ENCODE measurements at regions of chr14 and their contacts with region 1.

Region 1: GRCh38 chr14:69611201-69612011 is at the start of gene SUSD6:
- DNase-seq: peak; percentile 79 to 87 (median 85)
- ATAC-seq: peak; percentile 88
- H3K4me3 ChIP-seq: peak within 1 kb of the TSS; percentile 91
- H3K4me3 Mint-ChIP-seq: peak within 1 kb of the TSS; percentile 91 to 98 (median 94)
- H3K27ac ChIP-seq: peak within 1 kb of the TSS; percentile 85
- H3K27ac Mint-ChIP-seq: peak within 1 kb of the TSS; percentile 95 to 99 (median 98)
- H3K4me1 ChIP-seq: peaks cover 38 to 54% of the 10 kb centered on the region in 2 donors
- H3K4me1 Mint-ChIP-seq: peaks cover 44 to 69% (median 63%) of the 10 kb centered on the region in 7 donors
- H3K27me3 ChIP-seq: no peaks in the 10 kb centered on the region
- H3K27me3 Mint-ChIP-seq: no peaks in the 10 kb centered on the region
- total RNA-seq, gene SUSD6: 42.9 to 90.8 (median 65.0) TPM

Region 2: GRCh38 chr14:67674481-67675169 is 1936.8 kb before region 1 on chr14 and contains the start of gene VTI1B:
- CTCF ChIA-PET with region 1: no interaction called
- POLR2A ChIA-PET with region 1: no interaction called
- intact Hi-C with region 1: loop called in 1 of 2 experiments (anchors 2 kb)
- DNase-seq: peak; percentile 71 to 84 (median 80)
- ATAC-seq: peak; percentile 95
- H3K4me3 ChIP-seq: peak within 1 kb of the TSS; percentile 65
- H3K4me3 Mint-ChIP-seq: peak within 1 kb of the TSS; percentile 91 to 96 (median 93)
- H3K27ac ChIP-seq: peak within 1 kb of the TSS; percentile 95
- H3K27ac Mint-ChIP-seq: peak within 1 kb of the TSS; percentile 82 to 96 (median 92)
- H3K4me1 ChIP-seq: peaks cover 17 to 21% of the 10 kb centered on the region in 2 donors
- H3K4me1 Mint-ChIP-seq: peaks cover 22 to 62% (median 55%) of the 10 kb centered on the region in 7 donors
- H3K27me3 ChIP-seq: no peaks in the 10 kb centered on the region
- H3K27me3 Mint-ChIP-seq: no peaks in the 10 kb centered on the region
- total RNA-seq, gene VTI1B: 49.2 to 82.4 (median 65.9) TPM

Region 3: DNA sequence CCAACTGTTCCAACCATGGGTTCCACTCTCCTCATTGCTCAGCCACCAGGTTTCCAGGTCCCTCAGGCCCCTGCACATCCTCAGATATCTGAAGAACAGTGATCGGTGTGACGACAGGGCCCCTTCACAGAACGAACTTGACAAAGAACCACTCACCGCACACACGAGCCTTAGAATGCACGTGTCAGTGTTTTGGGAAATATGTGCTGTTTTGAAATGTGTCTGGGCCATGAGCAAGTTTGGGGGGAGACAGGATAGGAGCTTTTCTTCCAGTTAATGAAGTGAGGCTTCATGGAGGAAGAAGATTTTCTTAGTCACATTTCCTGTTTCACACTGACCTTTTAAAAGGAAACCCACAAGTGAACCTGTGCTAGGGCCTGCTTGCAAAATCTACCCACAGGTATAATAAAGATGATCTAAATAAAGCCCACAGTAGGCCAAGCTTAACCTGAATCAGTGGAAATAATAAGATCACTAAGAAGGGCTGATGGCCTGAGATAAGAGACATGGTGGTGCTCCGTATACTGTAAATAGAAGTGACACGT is 877.1 kb before region 1 on chr14:
- CTCF ChIA-PET with region 1: no interaction called
- POLR2A ChIA-PET with region 1: no interaction called
- intact Hi-C with region 1: no loop called
- DNase-seq: no peak
- ATAC-seq: peak; percentile 60
- H3K4me3 ChIP-seq: no peak overlapping the region
- H3K4me3 Mint-ChIP-seq: peak overlapping the region in 8 of 10 donors; percentile 2 to 50 (median 14)
- H3K27ac ChIP-seq: no peak overlapping the region
- H3K27ac Mint-ChIP-seq: peak overlapping the region in 7 of 9 donors; percentile 3 to 82 (median 66)
- H3K4me1 ChIP-seq: peaks cover 12 to 31% of the 10 kb centered on the region in 2 donors
- H3K4me1 Mint-ChIP-seq: peaks cover 17 to 53% (median 42%) of the 10 kb centered on the region in 7 donors
- H3K27me3 ChIP-seq: no peaks in the 10 kb centered on the region
- H3K27me3 Mint-ChIP-seq: no peaks in the 10 kb centered on the region

Region 4: DNA sequence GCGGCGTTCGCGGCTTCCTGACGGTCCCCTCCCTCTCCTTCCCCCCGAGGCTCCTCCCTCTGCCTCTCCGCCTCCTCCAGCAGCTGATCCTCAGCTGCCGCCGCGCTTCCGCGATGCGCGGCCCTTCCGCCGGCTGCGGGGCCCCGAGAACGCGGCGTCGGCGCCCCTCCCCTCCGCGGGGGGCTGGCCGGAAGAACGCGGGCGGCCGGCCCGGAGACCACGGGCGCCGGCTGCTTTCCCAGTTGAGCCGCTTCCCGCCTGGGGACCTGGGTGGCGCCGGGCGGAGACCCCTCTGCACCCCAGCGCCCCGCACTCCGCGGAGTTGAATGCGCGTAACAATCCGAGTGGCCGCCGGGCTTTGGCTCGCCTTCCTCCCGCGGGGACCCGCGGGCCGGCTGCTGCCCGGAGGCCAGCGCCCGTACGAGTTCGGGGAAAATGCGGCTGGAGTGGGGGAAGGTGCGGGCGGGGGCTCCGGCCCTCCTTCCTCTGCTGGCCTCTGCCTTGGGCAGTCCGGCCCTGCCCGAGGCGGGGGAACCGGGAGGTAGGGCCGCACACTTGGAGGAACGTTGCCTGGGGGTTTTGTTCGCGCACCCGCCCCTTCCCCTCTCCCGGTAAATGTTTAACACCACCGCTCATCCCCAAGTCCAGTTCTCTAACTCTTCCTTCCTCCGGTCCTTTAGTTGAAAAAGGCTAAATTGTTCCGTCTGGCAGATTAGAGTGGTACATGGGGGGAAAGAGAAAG is 458.1 kb before region 1 on chr14:
- CTCF ChIA-PET with region 1: no interaction called
- POLR2A ChIA-PET with region 1: no interaction called
- intact Hi-C with region 1: loop called in 1 of 2 experiments (anchors 2 kb)
- DNase-seq: peak; percentile 76 to 96 (median 91)
- ATAC-seq: peak; percentile 94
- H3K4me3 ChIP-seq: peak overlapping the region; percentile 83
- H3K4me3 Mint-ChIP-seq: peak overlapping the region; percentile 89 to 100 (median 97)
- H3K27ac ChIP-seq: peak overlapping the region; percentile 90
- H3K27ac Mint-ChIP-seq: peak overlapping the region; percentile 84 to 98 (median 93)
- H3K4me1 ChIP-seq: peaks cover 11 to 12% of the 10 kb centered on the region in 2 donors
- H3K4me1 Mint-ChIP-seq: peaks cover 30 to 37% (median 36%) of the 10 kb centered on the region in 7 donors
- H3K27me3 ChIP-seq: no peaks in the 10 kb centered on the region
- H3K27me3 Mint-ChIP-seq: peaks cover 0 to 36% (median 0%) of the 10 kb centered on the region in 5 donors

Region 5: GRCh38 chr14:69637503-69638030 is 26.2 kb after region 1 on chr14:
- CTCF ChIA-PET with region 1: interaction called, 5 read pairs
- POLR2A ChIA-PET with region 1: interaction called, 34 read pairs
- intact Hi-C with region 1: loop called (anchors 1 kb)
- DNase-seq: no peak
- ATAC-seq: peak; percentile 21
- H3K4me3 ChIP-seq: no peak overlapping the region
- H3K4me3 Mint-ChIP-seq: peak overlapping the region; percentile 55 to 83 (median 72)
- H3K27ac ChIP-seq: peak overlapping the region; percentile 24
- H3K27ac Mint-ChIP-seq: peak overlapping the region; percentile 47 to 94 (median 80)
- H3K4me1 ChIP-seq: peaks cover 42 to 60% of the 10 kb centered on the region in 2 donors
- H3K4me1 Mint-ChIP-seq: peaks cover 68 to 93% (median 81%) of the 10 kb centered on the region in 7 donors
- H3K27me3 ChIP-seq: no peaks in the 10 kb centered on the region
- H3K27me3 Mint-ChIP-seq: no peaks in the 10 kb centered on the region

Region 6: DNA sequence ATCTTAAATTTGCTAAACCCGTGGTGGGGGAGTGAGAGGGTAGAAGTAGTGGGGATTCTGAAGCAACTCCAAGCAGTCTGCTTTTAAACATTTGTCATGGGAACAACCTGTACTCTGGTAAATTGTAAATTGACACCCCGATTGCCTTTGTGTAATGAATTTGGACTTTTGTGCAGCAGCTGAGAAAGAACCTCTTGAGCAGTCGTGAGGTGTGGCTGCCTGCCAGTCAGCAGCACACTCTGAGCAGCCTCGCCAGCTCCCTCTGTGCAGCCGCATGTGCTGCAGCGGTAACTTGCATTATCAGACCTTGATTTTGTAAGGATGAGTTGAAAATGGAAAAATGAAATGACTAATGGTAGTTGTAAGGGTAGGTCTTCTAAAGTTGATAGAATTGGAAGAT is 74.3 kb after region 1 on chr14:
- CTCF ChIA-PET with region 1: interaction called, 6 read pairs
- POLR2A ChIA-PET with region 1: interaction called, 3 read pairs
- intact Hi-C with region 1: loop called in 1 of 2 experiments (anchors 1 kb)
- DNase-seq: peak in 1 of 9 donors; percentile 38
- ATAC-seq: peak; percentile 34
- H3K4me3 ChIP-seq: no peak overlapping the region
- H3K4me3 Mint-ChIP-seq: peak overlapping the region in 3 of 10 donors; percentile 1 to 78 (median 39)
- H3K27ac ChIP-seq: no peak overlapping the region
- H3K27ac Mint-ChIP-seq: peak overlapping the region in 5 of 9 donors; percentile 14 to 82 (median 57)
- H3K4me1 ChIP-seq: peaks cover 27 to 28% of the 10 kb centered on the region in 2 donors
- H3K4me1 Mint-ChIP-seq: peaks cover 71 to 83% (median 81%) of the 10 kb centered on the region in 7 donors
- H3K27me3 ChIP-seq: no peaks in the 10 kb centered on the region
- H3K27me3 Mint-ChIP-seq: no peaks in the 10 kb centered on the region

Region 7: GRCh38 chr14:69827560-69827959 is 216.2 kb after region 1 on chr14:
- CTCF ChIA-PET with region 1: no interaction called
- POLR2A ChIA-PET with region 1: no interaction called
- intact Hi-C with region 1: no loop called
- DNase-seq: no peak
- ATAC-seq: no peak
- H3K4me3 ChIP-seq: no peak overlapping the region
- H3K4me3 Mint-ChIP-seq: no peak overlapping the region
- H3K27ac ChIP-seq: no peak overlapping the region
- H3K27ac Mint-ChIP-seq: no peak overlapping the region
- H3K4me1 ChIP-seq: no peaks in the 10 kb centered on the region
- H3K4me1 Mint-ChIP-seq: no peaks in the 10 kb centered on the region
- H3K27me3 ChIP-seq: no peaks in the 10 kb centered on the region
- H3K27me3 Mint-ChIP-seq: peaks cover 0 to 8% (median 3%) of the 10 kb centered on the region in 5 donors

Region 8: GRCh38 chr14:70655110-70655826 is 1043.9 kb after region 1 on chr14:
- CTCF ChIA-PET with region 1: no interaction called
- POLR2A ChIA-PET with region 1: no interaction called
- intact Hi-C with region 1: loop called in 1 of 2 experiments (anchors 10 kb)
- DNase-seq: peak; percentile 29 to 93 (median 91)
- ATAC-seq: peak; percentile 95
- H3K4me3 ChIP-seq: peak overlapping the region; percentile 43
- H3K4me3 Mint-ChIP-seq: peak overlapping the region; percentile 76 to 89 (median 85)
- H3K27ac ChIP-seq: peak overlapping the region; percentile 84
- H3K27ac Mint-ChIP-seq: peak overlapping the region; percentile 94 to 99 (median 98)
- H3K4me1 ChIP-seq: peaks cover 60 to 83% of the 10 kb centered on the region in 2 donors
- H3K4me1 Mint-ChIP-seq: peaks cover 66 to 98% (median 94%) of the 10 kb centered on the region in 7 donors
- H3K27me3 ChIP-seq: no peaks in the 10 kb centered on the region
- H3K27me3 Mint-ChIP-seq: no peaks in the 10 kb centered on the region